AG04449 (cell line): ENCODE measurements at regions of chr10 and their contacts with region 1.

Region 1: DNA sequence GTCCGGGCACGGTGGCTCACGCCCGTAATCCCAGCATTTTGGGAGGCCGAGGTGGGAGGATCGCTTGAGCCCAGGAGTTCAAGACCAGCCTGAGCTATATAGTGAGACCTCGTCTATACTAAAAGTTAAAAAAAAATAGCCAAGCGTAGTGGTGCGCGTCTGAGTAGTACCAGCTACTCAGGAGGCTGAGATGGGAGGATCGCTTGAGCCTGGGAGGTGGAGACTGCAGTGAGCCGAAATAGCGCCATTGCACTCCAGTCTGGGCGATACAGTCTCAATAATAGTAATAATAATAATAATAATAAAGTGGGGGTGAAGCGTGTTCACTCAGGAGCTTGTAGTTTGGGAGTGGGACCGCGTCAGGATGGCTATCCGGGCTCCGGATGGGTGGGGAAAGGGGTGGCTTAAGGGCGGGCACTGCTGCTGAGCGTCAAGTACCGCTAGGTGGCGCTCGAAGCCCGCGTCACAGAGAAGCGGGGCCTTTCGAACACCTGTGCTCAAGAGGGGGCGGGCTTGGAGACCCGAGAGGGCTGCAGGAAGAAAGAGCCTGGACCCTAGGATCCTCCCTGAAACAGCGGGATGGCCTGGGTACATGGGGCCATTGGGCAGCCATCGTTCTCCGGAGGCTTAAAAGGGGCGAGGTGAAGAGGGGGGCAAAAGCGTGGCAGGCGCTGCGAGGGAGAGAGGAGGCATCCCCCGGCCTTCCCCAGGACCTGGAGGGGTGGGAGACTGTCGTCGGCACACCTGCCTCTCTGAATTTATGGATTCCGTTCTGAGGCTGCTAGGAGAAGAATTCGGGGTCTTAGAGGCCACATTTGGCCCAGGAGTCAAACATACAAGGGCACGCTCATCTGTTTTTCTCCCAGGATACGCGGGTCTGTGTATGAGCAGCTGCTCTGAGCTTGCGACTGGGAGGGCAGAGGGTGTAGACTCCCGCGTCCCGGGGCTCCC is 14.5 kb downstream of the LBX1 start:
- DNase-seq: no peak
- H3K4me3 ChIP-seq: no peak overlapping the region
- CTCF ChIP-seq: peak; percentile 82

Region 2: DNA sequence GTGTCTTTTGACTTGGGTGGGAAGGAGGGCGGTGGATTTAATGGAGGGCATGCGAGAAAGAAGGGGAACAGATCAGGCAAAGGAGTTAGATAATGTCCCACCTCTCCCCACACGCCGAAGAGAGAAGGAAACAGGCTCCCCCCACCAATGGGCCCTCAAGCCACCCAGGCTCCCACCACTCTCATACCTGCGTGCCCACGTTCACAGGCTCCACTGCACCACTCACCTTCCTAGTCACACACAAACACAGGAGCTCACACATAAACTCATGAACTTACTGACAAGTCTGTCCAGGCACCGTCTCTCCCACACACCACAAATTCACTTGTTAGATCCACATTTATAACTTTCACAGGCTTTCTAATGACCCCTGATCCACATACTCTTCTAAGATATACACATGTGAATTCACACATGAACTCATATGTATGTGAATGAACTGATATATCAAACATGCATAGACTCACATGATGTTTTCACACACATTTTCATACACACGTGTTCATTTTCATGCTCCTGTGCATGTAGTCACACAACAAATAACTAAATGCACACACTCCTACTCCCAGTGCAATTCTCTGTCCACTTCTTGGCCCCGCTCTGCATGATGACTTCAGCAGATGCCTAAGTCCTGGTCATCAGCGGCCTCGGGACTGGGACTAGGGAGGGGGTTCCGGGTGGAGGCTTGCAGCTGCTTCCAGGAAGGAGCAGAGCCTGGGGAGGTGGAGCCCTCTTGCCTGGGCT is 213.6 kb before region 1 on chr10:
- CTCF ChIA-PET with region 1: no interaction called
- POLR2A ChIA-PET with region 1: no interaction called
- DNase-seq: peak; percentile 70
- H3K4me3 ChIP-seq: peak overlapping the region; percentile 85
- CTCF ChIP-seq: no peak

Region 3: DNA sequence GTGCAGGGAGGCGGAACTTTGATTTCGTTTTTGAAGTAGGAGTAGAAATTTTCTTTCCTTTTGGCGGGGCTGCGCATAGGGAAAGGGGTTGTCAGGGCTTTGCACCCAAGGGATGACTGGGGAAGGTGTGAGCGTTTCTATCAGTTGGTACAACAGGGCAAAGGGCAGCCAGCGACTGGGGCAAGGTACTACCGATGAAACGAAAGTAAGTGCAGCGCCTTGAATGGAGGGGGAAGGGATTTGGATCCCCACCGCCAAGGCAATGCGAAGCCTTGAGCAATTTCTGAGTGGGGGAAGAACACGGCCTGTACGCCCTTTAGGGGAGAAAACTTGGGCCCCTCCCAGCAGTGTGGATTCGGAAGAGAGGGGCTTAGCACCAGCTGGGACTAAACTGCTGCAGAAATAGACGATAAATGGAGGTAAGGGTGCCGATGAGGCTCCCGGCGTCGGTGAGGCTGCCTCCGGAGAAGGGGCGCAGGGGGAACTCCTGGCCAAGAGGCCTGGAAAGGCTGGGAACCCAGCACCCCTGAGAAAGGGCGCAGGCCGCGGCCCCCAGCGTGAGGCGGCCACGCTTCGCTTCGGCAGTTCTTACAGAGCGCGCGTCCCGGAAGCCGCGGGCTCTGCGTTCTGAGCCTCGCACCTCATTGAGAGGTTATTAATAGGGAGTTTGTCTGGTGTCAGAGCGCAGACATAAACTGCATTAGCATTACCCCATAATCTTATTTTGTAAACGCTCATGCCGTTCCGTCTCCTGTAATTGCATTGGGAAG is 93.7 kb before region 1 on chr10:
- CTCF ChIA-PET with region 1: no interaction called
- POLR2A ChIA-PET with region 1: no interaction called
- DNase-seq: no peak
- H3K4me3 ChIP-seq: peak overlapping the region; percentile 50
- CTCF ChIP-seq: no peak

Region 4: GRCh38 chr10:101182936-101183335 is 31.8 kb before region 1 on chr10:
- CTCF ChIA-PET with region 1: interaction called, 12 read pairs
- POLR2A ChIA-PET with region 1: no interaction called
- DNase-seq: no peak
- H3K4me3 ChIP-seq: no peak overlapping the region
- CTCF ChIP-seq: no peak

Region 5: GRCh38 chr10:101291331-101292193 is 76.8 kb after region 1 on chr10:
- CTCF ChIA-PET with region 1: interaction called, 35 read pairs
- POLR2A ChIA-PET with region 1: no interaction called
- DNase-seq: no peak
- H3K4me3 ChIP-seq: peak overlapping the region; percentile 50
- CTCF ChIP-seq: peak; percentile 68

Region 6: DNA sequence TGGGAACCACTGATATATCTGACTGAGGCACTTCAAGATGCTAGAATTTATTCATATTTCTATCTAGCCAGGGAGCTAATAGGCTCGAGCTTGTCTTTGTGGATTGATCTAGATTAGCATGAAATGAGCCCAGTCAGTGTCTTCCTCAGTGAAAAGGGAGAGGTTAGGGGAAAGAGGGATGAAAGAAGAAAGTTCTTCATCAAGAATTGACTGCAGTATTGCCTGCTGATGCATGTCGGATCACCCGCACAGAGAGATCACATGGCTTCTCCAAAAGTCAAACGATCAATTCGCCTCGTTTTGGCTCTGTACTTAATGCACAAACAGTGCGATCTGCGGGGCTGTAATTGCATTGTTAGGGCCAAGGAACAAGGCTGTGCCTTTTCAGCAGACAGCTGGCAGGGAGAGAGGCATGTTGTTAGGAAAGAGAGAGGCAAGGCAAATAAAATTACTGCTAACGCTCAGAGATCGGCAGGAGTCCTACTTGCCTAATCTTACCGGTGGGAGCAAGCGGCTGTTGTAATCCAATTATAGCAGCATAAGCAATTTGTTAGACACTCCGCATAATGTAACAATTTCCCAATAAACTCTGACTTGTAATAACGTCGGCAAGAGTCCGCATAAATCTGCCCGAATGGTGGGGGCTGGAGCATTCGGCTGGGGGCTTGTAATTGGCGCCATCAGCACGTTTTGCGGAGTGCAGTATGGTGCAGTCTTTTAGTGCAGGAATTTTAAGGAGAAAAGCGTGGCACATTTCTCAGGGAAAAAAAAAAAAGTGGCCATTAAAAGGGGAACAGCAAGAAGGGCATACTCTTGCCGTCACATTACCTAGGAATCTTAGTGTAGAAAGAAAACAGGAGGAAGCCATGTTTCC is 271.2 kb after region 1 on chr10:
- CTCF ChIA-PET with region 1: interaction called, 13 read pairs
- POLR2A ChIA-PET with region 1: no interaction called
- DNase-seq: no peak
- H3K4me3 ChIP-seq: no peak overlapping the region
- CTCF ChIP-seq: no peak

Region 7: GRCh38 chr10:101569838-101570766 is 355.4 kb after region 1 on chr10:
- CTCF ChIA-PET with region 1: interaction called, 281 read pairs
- POLR2A ChIA-PET with region 1: no interaction called
- DNase-seq: no peak
- H3K4me3 ChIP-seq: peak overlapping the region; percentile 72
- CTCF ChIP-seq: peak; percentile 92

Region 8: DNA sequence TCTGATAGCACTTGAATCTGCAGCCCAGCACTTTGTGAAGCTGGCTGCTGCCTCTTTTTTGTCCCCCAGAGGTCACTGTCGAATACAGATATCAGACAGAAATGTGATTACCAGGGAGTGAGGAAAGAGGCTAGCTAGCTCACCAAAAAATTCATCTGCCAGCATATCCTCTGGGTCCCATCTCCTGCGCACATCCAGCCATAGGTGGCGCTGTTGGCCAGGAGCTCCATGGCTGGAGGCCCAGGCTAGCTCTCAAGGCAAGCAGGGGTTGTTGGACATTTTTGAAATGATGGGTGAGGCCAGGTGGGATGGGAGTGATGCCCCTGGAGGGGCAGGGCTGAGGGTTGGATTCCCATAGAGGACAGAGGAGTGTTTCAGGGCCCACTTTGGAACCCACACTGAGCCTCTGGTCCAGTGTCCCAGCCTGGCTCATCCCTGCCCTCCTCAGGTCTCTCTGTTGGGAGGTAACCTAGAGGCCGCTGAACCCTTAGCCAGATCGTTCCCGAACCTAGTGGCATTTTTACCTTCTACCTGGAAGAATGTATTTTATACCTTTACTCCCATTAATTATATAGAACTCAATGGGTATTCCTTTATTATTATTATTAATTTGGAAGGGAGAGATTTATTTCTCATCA is 388.2 kb after region 1 on chr10:
- CTCF ChIA-PET with region 1: interaction called, 15 read pairs
- POLR2A ChIA-PET with region 1: no interaction called
- DNase-seq: no peak
- H3K4me3 ChIP-seq: no peak overlapping the region
- CTCF ChIP-seq: peak; percentile 95